IMR-90 (cell line): ENCODE measurements at regions of chr9 and their contacts with region 1.

Region 1: DNA sequence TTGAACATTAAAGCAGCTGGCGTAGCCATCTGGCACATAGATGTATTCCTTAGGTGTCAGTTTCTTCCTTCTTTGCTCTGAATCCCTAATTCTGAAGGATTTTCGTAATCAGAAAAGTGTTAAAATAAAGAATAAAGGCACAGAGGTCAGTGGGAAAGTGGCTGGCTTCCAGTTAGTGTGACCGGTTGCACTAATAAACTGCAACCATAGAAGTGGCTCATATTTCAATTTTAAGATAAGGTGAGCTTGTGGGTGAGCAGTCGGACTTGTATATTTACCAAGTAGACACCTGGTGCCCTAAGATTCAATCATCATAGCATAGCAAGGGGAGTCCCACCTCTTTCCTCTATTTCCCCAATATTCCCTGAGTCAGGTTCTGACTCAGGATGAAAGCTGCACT is 459.6 kb downstream of the ACTL7B start:
- DNase-seq: no peak
- ATAC-seq: no peak
- H3K4me3 ChIP-seq: no peak overlapping the region
- H3K27ac ChIP-seq: no peak overlapping the region
- H3K4me1 ChIP-seq: no peaks in the 10 kb centered on the region
- H3K27me3 ChIP-seq: no peaks in the 10 kb centered on the region
- CTCF ChIP-seq: no peak
- POLR2A ChIP-seq: no peak
- RAD21 ChIP-seq: no peak

Region 2: DNA sequence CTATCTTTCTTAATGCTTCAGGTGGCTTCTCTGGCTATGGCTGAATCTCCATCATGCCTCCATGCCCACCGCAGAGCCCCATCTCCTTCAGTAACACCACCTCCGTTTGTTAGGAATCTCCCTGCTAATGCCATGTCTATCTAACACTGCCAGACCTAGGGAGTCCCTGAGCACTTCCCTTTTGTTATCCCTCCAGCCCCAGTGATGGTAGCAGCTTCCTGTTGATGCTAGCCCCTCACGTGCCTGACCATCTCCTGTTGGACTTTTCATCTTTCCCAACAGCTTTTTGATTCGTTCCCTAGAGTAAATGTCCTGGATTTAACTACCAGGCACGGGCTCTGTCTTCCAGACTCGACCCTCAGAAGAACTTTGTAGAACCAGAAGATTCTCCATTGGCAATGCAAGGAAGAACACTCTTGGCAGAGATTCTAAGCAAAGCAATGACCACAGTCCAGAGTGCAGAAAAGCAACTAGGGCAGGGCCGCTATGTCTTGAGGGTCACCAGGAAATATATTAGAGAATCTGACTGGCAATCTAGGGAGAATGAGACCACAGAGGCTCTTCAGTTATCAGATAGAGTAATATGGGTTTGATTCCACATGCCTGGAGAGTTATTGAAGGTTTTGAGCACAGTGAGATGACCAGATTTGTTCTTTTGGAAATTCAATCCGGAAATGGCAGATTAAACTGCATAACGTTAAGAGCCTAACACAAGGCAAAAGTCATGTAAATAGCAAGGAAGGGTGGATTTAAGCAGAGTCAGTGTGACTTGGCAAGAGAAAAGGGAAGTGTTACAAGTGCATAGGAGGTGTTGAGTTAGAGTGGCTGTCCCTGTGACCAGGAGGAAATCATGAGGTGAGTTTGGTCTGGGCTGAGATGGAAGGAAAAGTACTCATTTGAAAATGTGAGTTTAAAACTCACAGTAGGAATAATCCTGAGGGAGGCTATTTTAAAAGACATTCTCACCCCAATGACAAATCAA is 95.6 kb before region 1 on chr9:
- CTCF ChIA-PET with region 1: no interaction called
- POLR2A ChIA-PET with region 1: no interaction called
- dilution Hi-C with region 1: no loop called
- in situ Hi-C with region 1: no loop called
- intact Hi-C with region 1: loop called (anchors 5 kb)
- DNase-seq: no peak
- ATAC-seq: no peak
- H3K4me3 ChIP-seq: no peak overlapping the region
- H3K27ac ChIP-seq: no peak overlapping the region
- H3K4me1 ChIP-seq: peaks cover 5% of the 10 kb centered on the region; the same call in 1 of the 2 replicates
- H3K27me3 ChIP-seq: no peaks in the 10 kb centered on the region
- CTCF ChIP-seq: no peak
- POLR2A ChIP-seq: no peak
- RAD21 ChIP-seq: no peak